Dendritic cell treated with granulocyte-macrophage colony-stimulating factor and Interleukin-4, amounts not matched to agents 40 ng/mL and 50 ng/mL, for 4 days (primary cell): ENCODE measurements at regions of chr20 and their contacts with region 1.

Region 1: DNA sequence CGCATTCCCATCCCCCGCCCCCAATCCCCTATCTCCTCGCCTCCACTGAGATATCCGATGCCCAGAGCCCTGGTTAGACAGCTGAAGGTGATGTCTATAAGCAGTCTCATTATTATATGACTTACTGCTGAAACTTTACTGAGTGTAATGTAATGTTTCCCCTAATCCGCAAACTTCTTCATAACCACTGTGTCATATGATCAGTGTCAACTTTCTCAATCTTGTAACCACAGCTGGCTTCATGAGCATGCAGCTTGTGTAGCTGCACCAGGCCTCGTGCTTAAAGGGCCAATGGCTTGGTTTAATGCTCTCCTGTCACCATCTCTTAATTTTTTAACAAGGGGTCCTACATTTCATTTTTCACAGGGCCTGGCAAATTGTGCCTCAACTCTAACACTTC is 8.1 kb downstream of the ASIP start:
- H3K4me3 Mint-ChIP-seq: no peak overlapping the region
- H3K27ac Mint-ChIP-seq: peak overlapping the region; percentile 81
- H3K4me1 Mint-ChIP-seq: peaks cover 58% of the 10 kb centered on the region
- H3K27me3 Mint-ChIP-seq: no peaks in the 10 kb centered on the region

Region 2: GRCh38 chr20:34200023-34200422 is 49.3 kb before region 1 on chr20:
- intact Hi-C with region 1: loop called (anchors 5 kb)
- H3K4me3 Mint-ChIP-seq: no peak overlapping the region
- H3K27ac Mint-ChIP-seq: peak overlapping the region; percentile 60
- H3K4me1 Mint-ChIP-seq: peaks cover 16% of the 10 kb centered on the region
- H3K27me3 Mint-ChIP-seq: peaks cover 5% of the 10 kb centered on the region